ENCODE measurements at regions of chrX and their contacts with region 1.

Region 1: GRCh38 chrX:120790118-120790517 is 85.5 kb downstream of the CT47B1 start:
- DNase-seq: peak; percentile 5
- ATAC-seq: peak; percentile 24
- H3K4me3 Mint-ChIP-seq: no peak overlapping the region
- H3K27ac Mint-ChIP-seq: no peak overlapping the region
- H3K4me1 Mint-ChIP-seq: peaks cover 10% of the 10 kb centered on the region
- H3K27me3 Mint-ChIP-seq: no peaks in the 10 kb centered on the region
- CTCF ChIP-seq: peak; percentile 40

Region 2: DNA sequence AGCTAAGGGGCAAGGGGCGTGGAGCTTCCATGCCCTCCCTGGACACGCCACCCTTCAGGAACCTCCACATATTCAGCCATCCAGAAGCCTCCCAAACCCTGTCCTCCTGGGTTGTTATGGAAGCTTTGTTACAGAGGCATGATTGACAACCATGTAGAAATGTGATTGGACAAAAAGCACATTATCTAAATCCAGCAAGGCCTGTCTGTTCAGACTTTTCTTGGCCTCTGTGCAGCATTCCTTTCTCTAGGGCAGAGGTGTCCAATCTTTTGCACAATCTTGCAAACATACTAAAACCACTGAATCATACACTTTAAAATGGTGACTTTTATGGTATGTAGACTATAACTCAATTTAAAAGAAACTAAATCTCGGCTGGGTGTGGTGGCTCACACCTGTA is 1237.6 kb before region 1 on chrX:
- CTCF ChIA-PET with region 1: no interaction called
- POLR2A ChIA-PET with region 1: no interaction called
- intact Hi-C with region 1: no loop called
- DNase-seq: no peak
- ATAC-seq: no peak
- H3K4me3 Mint-ChIP-seq: no peak overlapping the region
- H3K27ac Mint-ChIP-seq: no peak overlapping the region
- H3K4me1 Mint-ChIP-seq: peaks cover 14% of the 10 kb centered on the region
- H3K27me3 Mint-ChIP-seq: no peaks in the 10 kb centered on the region
- CTCF ChIP-seq: no peak

Region 3: DNA sequence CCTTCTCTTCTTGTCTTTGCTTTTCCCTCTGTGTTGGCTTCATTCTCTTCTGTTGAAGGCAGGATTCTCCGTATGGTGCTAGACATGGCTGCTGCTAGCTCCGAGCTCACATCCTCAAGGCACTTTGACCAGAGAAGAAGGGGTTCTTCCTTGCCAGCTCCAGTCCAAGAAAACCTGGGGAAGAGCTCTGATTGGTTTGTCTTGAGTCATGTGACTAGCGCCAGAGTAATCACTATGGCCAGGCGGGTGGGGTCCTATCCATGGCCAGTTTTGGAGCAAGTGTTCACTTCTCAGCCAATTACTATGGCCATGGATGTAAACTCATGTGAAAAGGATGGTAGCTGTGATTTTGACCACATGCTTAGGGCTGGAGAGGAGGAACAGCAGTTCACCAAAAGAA is 11.3 kb after region 1 on chrX:
- CTCF ChIA-PET with region 1: interaction called, 22 read pairs
- POLR2A ChIA-PET with region 1: no interaction called
- intact Hi-C with region 1: no loop called
- DNase-seq: no peak
- ATAC-seq: no peak
- H3K4me3 Mint-ChIP-seq: no peak overlapping the region
- H3K27ac Mint-ChIP-seq: no peak overlapping the region
- H3K4me1 Mint-ChIP-seq: peaks cover 20% of the 10 kb centered on the region
- H3K27me3 Mint-ChIP-seq: peaks cover 2% of the 10 kb centered on the region
- CTCF ChIP-seq: no peak

Measured in activated CD8-positive, alpha-beta T cell treated with anti-CD3 and anti-CD28 coated beads for 36 hours (primary cell).